A549 (cell line): ENCODE measurements at regions of chr17 and their contacts with region 1.

Region 1: GRCh38 chr17:29116804-29117772 is 63.1 kb downstream of the MYO18A start:
- DNase-seq: peak; percentile 76 to 82
- ATAC-seq: peak; percentile 65 to 82
- H3K4me3 ChIP-seq: no peak overlapping the region
- H3K27ac ChIP-seq: no peak overlapping the region
- H3K4me1 ChIP-seq: no peaks in the 10 kb centered on the region
- CTCF ChIP-seq: peak; percentile 94
- EP300 ChIP-seq: no peak
- POLR2A ChIP-seq: no peak
- RAD21 ChIP-seq: peak; percentile 75 to 82

Region 2: GRCh38 chr17:28992625-28993600 is 124.2 kb before region 1 on chr17:
- CTCF ChIA-PET with region 1: interaction called, 33 read pairs
- POLR2A ChIA-PET with region 1: no interaction called
- DNase-seq: peak in 1 of 2 experiments; percentile 32
- ATAC-seq: peak; percentile 53 to 68; a peak in 5 of 6 replicates
- H3K4me3 ChIP-seq: no peak overlapping the region
- H3K27ac ChIP-seq: no peak overlapping the region
- H3K4me1 ChIP-seq: no peaks in the 10 kb centered on the region
- CTCF ChIP-seq: no peak
- EP300 ChIP-seq: no peak
- POLR2A ChIP-seq: no peak
- RAD21 ChIP-seq: no peak

Region 3: GRCh38 chr17:29019475-29020181 is 97.5 kb before region 1 on chr17:
- CTCF ChIA-PET with region 1: interaction called, 36 read pairs
- POLR2A ChIA-PET with region 1: no interaction called
- DNase-seq: no peak
- ATAC-seq: no peak
- H3K4me3 ChIP-seq: no peak overlapping the region
- H3K27ac ChIP-seq: no peak overlapping the region
- H3K4me1 ChIP-seq: no peaks in the 10 kb centered on the region
- CTCF ChIP-seq: no peak
- EP300 ChIP-seq: no peak
- POLR2A ChIP-seq: no peak
- RAD21 ChIP-seq: no peak

Region 4: DNA sequence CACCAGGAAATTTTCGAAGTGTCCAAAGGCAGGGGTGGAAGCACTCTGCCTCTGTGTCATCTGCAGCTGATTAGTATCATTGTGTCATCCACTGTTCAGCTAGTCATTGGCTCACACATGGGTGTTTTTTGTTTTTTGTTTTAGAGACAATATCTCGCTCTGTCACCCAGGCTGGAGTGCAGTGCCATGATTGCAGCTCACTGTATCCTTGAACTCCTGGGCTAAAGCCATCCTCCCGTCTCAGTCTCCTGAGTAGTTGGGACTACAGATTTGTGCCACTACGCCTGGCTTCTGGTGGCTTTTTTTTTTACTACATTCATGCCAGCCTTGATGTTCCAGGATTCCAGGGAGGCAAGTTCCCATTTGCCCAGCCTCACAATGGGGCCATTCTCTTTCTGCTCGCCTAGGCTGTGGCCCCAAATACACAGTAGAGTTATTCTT is 95.6 kb after region 1 on chr17:
- CTCF ChIA-PET with region 1: interaction called, 81 read pairs
- POLR2A ChIA-PET with region 1: no interaction called
- DNase-seq: no peak
- ATAC-seq: no peak
- H3K4me3 ChIP-seq: no peak overlapping the region
- H3K27ac ChIP-seq: no peak overlapping the region
- H3K4me1 ChIP-seq: 0 out of 3 replicates have a peak, but pooled peaks cover 2% of the 10 kb centered on the region
- CTCF ChIP-seq: no peak
- EP300 ChIP-seq: no peak
- POLR2A ChIP-seq: no peak
- RAD21 ChIP-seq: no peak